Heart left ventricle (tissue), 16 donors: ENCODE measurements at regions of chr7 and their contacts with region 1.

Region 1: GRCh38 chr7:40763318-40764287 is 628.8 kb downstream of the SUGCT start:
- DNase-seq: no peak
- ATAC-seq: no peak
- H3K4me3 ChIP-seq: no peak overlapping the region
- H3K27ac ChIP-seq: no peak overlapping the region
- H3K4me1 ChIP-seq: peaks cover 0 to 9% (median 0%) of the 10 kb centered on the region in 12 donors
- H3K27me3 ChIP-seq: no peaks in the 10 kb centered on the region
- CTCF ChIP-seq: peak in 3 of 12 donors; percentile 18 to 28 (median 24)
- POLR2A ChIP-seq: no peak

Region 2: DNA sequence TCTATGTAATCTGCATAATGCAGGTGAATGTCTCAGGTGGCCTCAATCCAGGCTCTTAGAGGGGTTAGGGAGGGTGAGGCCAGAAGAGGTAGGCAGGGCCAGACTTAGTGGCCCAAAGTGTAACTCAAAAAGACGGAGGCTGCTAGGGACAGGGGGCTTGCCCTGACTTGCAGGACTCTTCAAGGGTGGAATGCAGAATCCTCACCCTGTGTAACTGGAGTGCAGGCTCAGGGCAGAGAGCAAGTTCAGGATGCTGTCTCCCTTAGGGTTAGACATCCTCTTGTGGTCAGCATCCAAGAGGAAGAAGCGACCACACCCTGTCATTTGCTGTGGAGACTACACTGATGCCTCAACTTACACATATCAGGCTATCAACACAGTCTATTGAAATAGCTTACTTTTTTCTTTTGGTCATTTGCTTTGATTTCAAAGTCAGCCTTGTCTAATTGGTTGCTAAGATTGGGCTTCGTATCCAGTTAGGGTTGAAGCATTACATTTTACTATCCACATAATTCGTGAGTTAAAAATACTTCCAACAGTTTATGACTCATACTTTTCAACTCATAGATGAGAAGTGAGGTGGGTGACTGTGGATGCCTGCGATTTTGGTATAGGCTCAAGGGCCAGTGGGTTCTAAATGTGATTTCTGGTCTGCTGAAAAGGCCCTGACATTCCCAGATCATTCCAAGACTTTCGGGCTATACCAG is 65.2 kb before region 1 on chr7:
- intact Hi-C with region 1: loop called in 1 of 10 experiments (anchors 10 kb)
- DNase-seq: no peak
- ATAC-seq: no peak
- H3K4me3 ChIP-seq: no peak overlapping the region
- H3K27ac ChIP-seq: no peak overlapping the region
- H3K4me1 ChIP-seq: peaks cover 0 to 4% (median 0%) of the 10 kb centered on the region in 12 donors
- H3K27me3 ChIP-seq: no peaks in the 10 kb centered on the region
- CTCF ChIP-seq: no peak
- POLR2A ChIP-seq: no peak

Region 3: GRCh38 chr7:41039981-41040380 is 276.4 kb after region 1 on chr7:
- intact Hi-C with region 1: loop called in 1 of 10 experiments (anchors 5 kb)
- DNase-seq: no peak
- ATAC-seq: no peak
- H3K4me3 ChIP-seq: no peak overlapping the region
- H3K27ac ChIP-seq: no peak overlapping the region
- H3K4me1 ChIP-seq: no peaks in the 10 kb centered on the region
- H3K27me3 ChIP-seq: no peaks in the 10 kb centered on the region
- CTCF ChIP-seq: no peak
- POLR2A ChIP-seq: no peak

Region 4: GRCh38 chr7:41416208-41416595 is 652.6 kb after region 1 on chr7:
- intact Hi-C with region 1: no loop called
- DNase-seq: no peak
- ATAC-seq: no peak
- H3K4me3 ChIP-seq: no peak overlapping the region
- H3K27ac ChIP-seq: no peak overlapping the region
- H3K4me1 ChIP-seq: peaks cover 0 to 3% (median 0%) of the 10 kb centered on the region in 12 donors
- H3K27me3 ChIP-seq: no peaks in the 10 kb centered on the region
- CTCF ChIP-seq: no peak
- POLR2A ChIP-seq: no peak